ENCODE measurements at regions of chr15 and their contacts with region 1.

Region 1: DNA sequence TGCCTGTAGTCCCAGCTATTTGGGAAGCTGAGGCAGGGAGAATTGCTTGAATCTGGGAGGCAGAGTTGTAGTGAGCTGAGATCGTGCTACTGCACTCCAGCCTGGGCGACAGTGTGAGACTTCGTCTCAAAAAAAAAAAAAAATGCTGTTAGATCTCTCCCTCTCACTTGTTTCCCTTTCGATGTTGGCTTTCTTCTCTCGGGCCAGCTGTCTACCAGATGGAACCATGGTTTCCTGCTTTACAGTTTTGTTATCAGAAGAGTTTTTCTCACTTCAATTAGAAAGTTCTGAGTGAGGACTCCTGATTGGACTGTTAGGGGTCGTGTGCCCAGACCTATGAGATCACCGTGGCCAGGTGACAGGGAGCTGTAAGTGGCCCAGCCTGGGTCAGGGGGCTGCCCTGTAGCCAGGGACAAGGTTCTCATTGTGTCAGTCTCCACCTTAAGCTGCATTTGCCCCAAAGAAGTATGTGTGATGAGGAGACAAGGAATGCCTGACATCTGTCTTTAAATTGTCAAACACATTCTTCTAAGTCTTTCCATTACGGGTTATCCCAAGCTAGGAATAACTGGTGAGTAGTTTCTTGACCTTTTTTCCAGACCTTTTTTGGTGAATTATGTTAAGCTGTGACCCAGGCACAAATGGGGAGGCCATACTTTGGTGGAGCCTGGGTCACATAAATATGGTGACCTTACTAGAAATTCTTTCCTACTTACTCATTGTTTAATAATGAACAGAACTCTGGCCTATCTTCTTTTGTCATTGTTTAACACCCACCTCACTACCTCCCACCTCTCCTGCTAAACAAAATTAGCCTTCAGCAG is 25.2 kb downstream of the SNAPC5 start:
- DNase-seq: peak; percentile 52
- H3K4me3 Mint-ChIP-seq: peak overlapping the region; percentile 1
- H3K27ac Mint-ChIP-seq: peak overlapping the region; percentile 80
- H3K4me1 Mint-ChIP-seq: peaks cover 61% of the 10 kb centered on the region
- H3K27me3 Mint-ChIP-seq: no peaks in the 10 kb centered on the region

Region 2: GRCh38 chr15:66401130-66402021 is 71.0 kb before region 1 on chr15:
- intact Hi-C with region 1: loop called (anchors 5 kb)
- DNase-seq: no peak
- H3K4me3 Mint-ChIP-seq: peak overlapping the region; percentile 76
- H3K27ac Mint-ChIP-seq: peak overlapping the region; percentile 75
- H3K4me1 Mint-ChIP-seq: peaks cover 74% of the 10 kb centered on the region
- H3K27me3 Mint-ChIP-seq: no peaks in the 10 kb centered on the region

Region 3: DNA sequence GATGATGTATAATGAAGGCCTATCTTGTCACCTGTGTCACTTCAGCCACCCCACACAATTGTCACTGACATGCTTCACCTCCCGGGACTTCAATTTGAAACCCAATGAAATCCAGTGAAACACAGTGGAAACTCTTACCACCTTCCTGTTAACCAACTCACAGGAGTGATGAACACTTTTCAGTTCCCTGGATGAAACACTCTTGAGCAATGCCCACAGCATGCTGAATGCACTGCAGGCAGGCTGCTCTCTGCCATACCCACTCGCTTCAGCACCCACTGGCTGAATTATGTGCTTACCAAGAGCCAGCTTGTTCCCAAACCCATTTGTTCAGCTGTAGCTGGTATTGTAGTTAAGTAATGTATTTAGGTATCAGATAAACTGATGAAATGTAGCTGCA is 38.7 kb before region 1 on chr15:
- intact Hi-C with region 1: loop called (anchors 5 kb)
- DNase-seq: no peak
- H3K4me3 Mint-ChIP-seq: no peak overlapping the region
- H3K27ac Mint-ChIP-seq: peak overlapping the region; percentile 71
- H3K4me1 Mint-ChIP-seq: peaks cover 38% of the 10 kb centered on the region
- H3K27me3 Mint-ChIP-seq: no peaks in the 10 kb centered on the region

Region 4: GRCh38 chr15:66765478-66766281 is 293.3 kb after region 1 on chr15:
- intact Hi-C with region 1: no loop called
- DNase-seq: no peak
- H3K4me3 Mint-ChIP-seq: no peak overlapping the region
- H3K27ac Mint-ChIP-seq: no peak overlapping the region
- H3K4me1 Mint-ChIP-seq: peaks cover 8% of the 10 kb centered on the region
- H3K27me3 Mint-ChIP-seq: peaks cover 33% of the 10 kb centered on the region

Region 5: DNA sequence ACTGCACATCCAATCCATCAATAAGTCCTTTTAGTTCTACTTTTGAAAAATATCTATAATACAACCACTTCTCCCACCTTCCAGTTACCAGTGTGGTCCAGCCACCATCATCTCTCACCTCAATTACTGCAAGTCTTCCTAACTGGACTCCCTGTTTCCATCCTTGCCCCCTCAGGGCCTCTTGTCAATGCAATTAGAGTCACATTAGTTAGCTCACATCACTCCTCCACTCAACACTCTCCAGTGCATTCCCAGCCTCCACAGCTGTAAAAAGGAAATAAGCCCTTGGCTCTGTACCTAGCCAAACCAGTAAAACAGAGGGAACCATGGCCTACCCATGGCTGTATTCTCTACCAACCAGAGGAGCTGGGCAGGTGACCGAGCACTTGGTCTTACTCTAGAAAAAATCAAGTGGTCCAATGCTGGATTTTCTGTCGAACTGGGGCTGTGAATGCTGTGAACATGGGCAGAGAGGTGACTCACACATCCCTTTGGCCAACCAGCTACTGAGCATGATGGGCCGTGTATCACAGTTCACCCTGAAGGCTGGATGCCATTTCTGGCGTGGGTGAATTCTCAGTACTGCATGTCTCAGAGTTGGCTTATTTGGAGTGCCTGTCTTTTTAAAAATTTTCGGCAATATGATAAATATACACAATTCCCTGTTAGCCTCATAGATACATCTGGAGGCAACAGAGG is 986.1 kb after region 1 on chr15:
- intact Hi-C with region 1: no loop called
- DNase-seq: no peak
- H3K4me3 Mint-ChIP-seq: no peak overlapping the region
- H3K27ac Mint-ChIP-seq: no peak overlapping the region
- H3K4me1 Mint-ChIP-seq: no peaks in the 10 kb centered on the region
- H3K27me3 Mint-ChIP-seq: peaks cover 11% of the 10 kb centered on the region

Measured in activated T-helper 1 cell treated with anti-CD3 and anti-CD28 coated beads, Interleukin-12 subunit alpha, Interleukin-12 subunit beta, Interleukin-2, Interleukin-4 antibody, amounts not matched to agents 30 ng/mL and 10 ng/mL and 1 ng/mL, durations not matched to agents 14 hours and 24 hours and 36 hours (primary cell).